MCF 10A (cell line): ENCODE measurements at regions of chr12 and their contacts with region 1.

Region 1: DNA sequence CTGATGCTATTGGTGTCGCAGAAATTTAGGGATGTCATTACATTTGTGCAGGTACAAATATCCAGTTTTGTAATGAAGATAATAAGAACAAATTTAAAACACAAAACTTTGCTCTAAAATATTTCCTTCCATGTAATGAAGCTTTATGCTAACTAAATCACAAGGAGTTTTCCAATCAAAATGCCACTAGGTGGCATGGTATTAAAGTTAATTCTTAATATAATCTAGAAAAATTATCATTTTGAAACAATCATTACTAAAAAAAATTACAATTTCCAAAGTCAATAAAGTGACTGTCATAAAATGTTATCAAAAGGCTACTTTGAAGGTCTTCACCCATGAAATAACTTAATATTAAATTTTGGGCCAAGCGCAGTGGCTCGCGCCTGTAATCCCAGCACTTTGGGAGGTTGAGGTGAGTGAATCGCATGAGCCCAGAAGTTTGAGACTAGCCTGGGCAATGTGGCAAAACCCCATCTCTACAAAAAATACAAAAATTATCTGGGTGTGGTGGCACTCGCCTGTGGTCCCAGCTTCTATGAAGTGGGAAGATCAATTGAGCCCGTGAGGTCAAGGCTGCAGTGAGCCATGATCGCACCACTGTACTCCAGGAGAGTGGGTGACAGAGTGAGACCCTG is 77.4 kb downstream of the KIF21A start:
- DNase-seq: no peak
- H3K4me3 Mint-ChIP-seq: no peak overlapping the region
- H3K27ac Mint-ChIP-seq: no peak overlapping the region
- H3K4me1 Mint-ChIP-seq: no peaks in the 10 kb centered on the region
- H3K27me3 Mint-ChIP-seq: no peaks in the 10 kb centered on the region
- CTCF ChIP-seq: peak; percentile 9

Region 2: GRCh38 chr12:39199351-39199750 is 166.1 kb before region 1 on chr12:
- CTCF ChIA-PET with region 1: no interaction called
- POLR2A ChIA-PET with region 1: no interaction called
- intact Hi-C with region 1: no loop called
- DNase-seq: no peak
- H3K4me3 Mint-ChIP-seq: no peak overlapping the region
- H3K27ac Mint-ChIP-seq: no peak overlapping the region
- H3K4me1 Mint-ChIP-seq: no peaks in the 10 kb centered on the region
- H3K27me3 Mint-ChIP-seq: no peaks in the 10 kb centered on the region
- CTCF ChIP-seq: no peak

Region 3: DNA sequence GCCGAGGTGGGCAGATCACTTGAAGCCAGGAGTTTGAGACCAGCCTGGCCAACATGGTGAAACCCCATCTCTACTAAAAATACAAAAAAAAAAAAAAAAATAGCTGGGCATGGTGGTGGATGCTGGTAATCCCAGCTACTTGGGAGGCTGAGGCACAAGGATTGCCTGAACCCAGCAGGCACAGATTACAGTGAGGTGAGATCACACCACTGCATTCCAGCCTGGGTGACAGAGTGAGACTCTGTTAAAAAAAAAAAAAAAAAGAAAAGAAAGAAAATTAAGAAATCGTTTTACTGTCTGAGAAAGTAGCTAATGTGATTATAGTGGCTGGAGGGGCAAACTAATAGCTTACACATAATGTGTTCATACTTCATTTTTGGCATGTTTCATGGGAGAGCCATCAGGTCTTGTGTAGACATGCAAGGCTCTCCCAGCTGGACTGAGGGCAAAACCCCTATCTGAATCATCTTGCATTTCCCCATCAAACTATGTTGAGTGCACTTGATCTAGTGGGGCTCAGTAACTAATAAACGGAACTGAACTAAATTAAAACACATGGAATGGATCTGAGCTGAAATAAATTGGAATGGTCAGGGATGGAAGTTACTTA is 61.3 kb after region 1 on chr12:
- CTCF ChIA-PET with region 1: no interaction called
- POLR2A ChIA-PET with region 1: no interaction called
- intact Hi-C with region 1: loop called (anchors 5 kb)
- DNase-seq: peak; percentile 93
- H3K4me3 Mint-ChIP-seq: peak overlapping the region; percentile 34
- H3K27ac Mint-ChIP-seq: peak overlapping the region; percentile 21
- H3K4me1 Mint-ChIP-seq: peaks cover 17% of the 10 kb centered on the region
- H3K27me3 Mint-ChIP-seq: no peaks in the 10 kb centered on the region
- CTCF ChIP-seq: no peak

Region 4: GRCh38 chr12:39503445-39503844 is 138.0 kb after region 1 on chr12:
- CTCF ChIA-PET with region 1: interaction called, 4 read pairs
- POLR2A ChIA-PET with region 1: no interaction called
- intact Hi-C with region 1: loop called (anchors 5 kb)
- DNase-seq: peak; percentile 61
- H3K4me3 Mint-ChIP-seq: no peak overlapping the region
- H3K27ac Mint-ChIP-seq: no peak overlapping the region
- H3K4me1 Mint-ChIP-seq: peaks cover 18% of the 10 kb centered on the region
- H3K27me3 Mint-ChIP-seq: no peaks in the 10 kb centered on the region
- CTCF ChIP-seq: peak; percentile 51

Region 5: GRCh38 chr12:39619660-39620433 is 254.4 kb after region 1 on chr12 and contains the start of gene ABCD2:
- CTCF ChIA-PET with region 1: interaction called, 17 read pairs
- POLR2A ChIA-PET with region 1: no interaction called
- intact Hi-C with region 1: loop called (anchors 1 kb)
- DNase-seq: peak; percentile 66
- H3K4me3 Mint-ChIP-seq: no peak within 1 kb of the TSS
- H3K27ac Mint-ChIP-seq: no peak within 1 kb of the TSS
- H3K4me1 Mint-ChIP-seq: no peaks in the 10 kb centered on the region
- H3K27me3 Mint-ChIP-seq: no peaks in the 10 kb centered on the region
- CTCF ChIP-seq: peak; percentile 31
- total RNA-seq, gene ABCD2: 0.20 and 0.42 TPM in 2 replicates